ENCODE measurements at regions of chr14 and their contacts with region 1.

Region 1: GRCh38 chr14:28382460-28383220 is 383.9 kb upstream of the FOXG1 start:
- DNase-seq: peak; percentile 91
- H3K4me3 Mint-ChIP-seq: peak overlapping the region; percentile 54
- H3K27ac Mint-ChIP-seq: peak overlapping the region; percentile 90
- H3K4me1 Mint-ChIP-seq: peaks cover 23% of the 10 kb centered on the region
- H3K27me3 Mint-ChIP-seq: no peaks in the 10 kb centered on the region
- CTCF ChIP-seq: no peak

Region 2: GRCh38 chr14:28356835-28357234 is 25.8 kb before region 1 on chr14:
- CTCF ChIA-PET with region 1: no interaction called
- POLR2A ChIA-PET with region 1: no interaction called
- intact Hi-C with region 1: no loop called
- DNase-seq: peak; percentile 1
- H3K4me3 Mint-ChIP-seq: no peak overlapping the region
- H3K27ac Mint-ChIP-seq: no peak overlapping the region
- H3K4me1 Mint-ChIP-seq: no peaks in the 10 kb centered on the region
- H3K27me3 Mint-ChIP-seq: no peaks in the 10 kb centered on the region
- CTCF ChIP-seq: no peak

Region 3: DNA sequence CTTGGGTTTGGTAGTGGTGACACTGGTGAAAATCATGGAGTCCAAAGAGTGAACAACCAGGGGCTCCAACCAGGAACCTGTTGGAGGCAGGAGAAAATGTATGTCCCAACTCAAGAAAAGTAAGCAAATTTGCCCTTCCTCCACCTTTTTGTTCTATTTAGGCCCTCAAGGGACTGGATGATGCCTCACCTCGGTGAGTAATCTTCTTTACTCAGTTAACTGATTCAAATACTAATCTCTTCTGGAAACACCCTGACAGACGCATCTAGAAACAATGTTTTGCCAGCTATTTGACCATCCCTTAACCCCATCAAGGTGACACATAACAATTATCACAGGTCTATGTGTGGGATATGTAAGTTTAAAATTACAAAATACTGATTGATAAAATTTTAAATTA is 111.6 kb after region 1 on chr14:
- CTCF ChIA-PET with region 1: no interaction called
- POLR2A ChIA-PET with region 1: no interaction called
- intact Hi-C with region 1: loop called (anchors 10 kb)
- DNase-seq: peak; percentile 58
- H3K4me3 Mint-ChIP-seq: no peak overlapping the region
- H3K27ac Mint-ChIP-seq: peak overlapping the region; percentile 61
- H3K4me1 Mint-ChIP-seq: peaks cover 10% of the 10 kb centered on the region
- H3K27me3 Mint-ChIP-seq: no peaks in the 10 kb centered on the region
- CTCF ChIP-seq: no peak

Measured in MCF 10A (cell line).